Heart left ventricle (tissue), 16 donors: ENCODE measurements at regions of chr6 and their contacts with region 1.

Region 1: DNA sequence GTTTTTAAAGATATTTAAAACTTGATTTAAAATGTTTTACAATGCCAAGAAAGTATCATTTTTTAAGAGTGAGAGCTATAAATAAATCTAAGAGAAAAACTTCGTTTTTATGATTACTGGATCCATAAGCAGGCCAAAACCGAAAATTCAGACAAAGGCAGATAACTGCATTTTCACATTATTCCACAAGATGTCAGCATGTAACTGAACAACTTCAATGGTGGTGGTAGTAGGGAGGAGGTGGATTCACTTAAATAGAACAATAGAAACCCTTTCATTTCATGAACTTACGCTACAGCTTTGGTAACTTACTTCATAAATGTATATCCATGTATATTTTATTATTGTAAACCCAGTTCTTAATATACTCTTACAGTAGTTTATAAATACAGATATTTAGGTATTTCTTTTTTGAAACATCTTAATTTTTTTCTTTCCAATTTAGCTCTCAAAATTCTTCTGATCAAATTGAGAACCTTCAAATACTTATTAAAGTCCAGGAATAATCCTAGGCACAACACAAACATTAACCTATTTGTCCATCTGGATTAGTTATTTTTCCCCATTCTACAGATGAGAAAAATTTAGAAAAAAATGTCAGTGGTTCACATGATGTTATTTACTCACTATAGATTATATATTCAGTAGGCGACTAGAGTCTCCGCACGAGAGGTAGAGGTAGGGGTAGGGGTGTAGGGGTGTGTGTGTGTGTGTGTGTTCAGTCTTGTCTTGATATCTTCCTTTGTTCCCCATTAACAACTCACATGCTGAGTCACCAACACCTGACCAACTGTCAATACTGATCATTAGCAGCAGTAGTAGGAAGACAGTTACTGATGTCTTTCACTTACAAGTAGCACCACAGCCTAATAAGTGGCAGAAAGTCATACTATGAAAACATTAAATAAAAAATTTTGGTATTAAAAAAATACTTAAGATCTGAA is 111.5 kb downstream of the ARHGAP18 start:
- DNase-seq: no peak
- ATAC-seq: peak in 3 of 4 donors; percentile 67 to 71 (median 71)
- H3K4me3 ChIP-seq: no peak overlapping the region
- H3K27ac ChIP-seq: no peak overlapping the region
- H3K4me1 ChIP-seq: peaks cover 0 to 8% (median 0%) of the 10 kb centered on the region in 12 donors
- H3K27me3 ChIP-seq: no peaks in the 10 kb centered on the region
- CTCF ChIP-seq: peak; percentile 70 to 92 (median 88)
- POLR2A ChIP-seq: no peak

Region 2: GRCh38 chr6:129730477-129731165 is 132.1 kb after region 1 on chr6:
- intact Hi-C with region 1: loop called (anchors 1 to 5 kb)
- DNase-seq: no peak
- ATAC-seq: no peak
- H3K4me3 ChIP-seq: no peak overlapping the region
- H3K27ac ChIP-seq: no peak overlapping the region
- H3K4me1 ChIP-seq: peaks cover 0 to 6% (median 0%) of the 10 kb centered on the region in 12 donors
- H3K27me3 ChIP-seq: no peaks in the 10 kb centered on the region
- CTCF ChIP-seq: peak; percentile 38 to 70 (median 58)
- POLR2A ChIP-seq: no peak

Region 3: GRCh38 chr6:129936329-129937165 is 338.0 kb after region 1 on chr6:
- intact Hi-C with region 1: loop called in 6 of 10 experiments (anchors 5 to 10 kb)
- DNase-seq: peak in 3 of 5 donors; percentile 25 to 47 (median 33)
- ATAC-seq: peak in 1 of 4 donors; percentile 22
- H3K4me3 ChIP-seq: no peak overlapping the region
- H3K27ac ChIP-seq: no peak overlapping the region
- H3K4me1 ChIP-seq: peaks cover 0 to 4% (median 0%) of the 10 kb centered on the region in 12 donors
- H3K27me3 ChIP-seq: peaks cover 0 to 13% (median 0%) of the 10 kb centered on the region in 9 donors
- CTCF ChIP-seq: peak in 11 of 12 donors; percentile 20 to 69 (median 54)
- POLR2A ChIP-seq: no peak

Region 4: GRCh38 chr6:130020907-130021629 is 422.6 kb after region 1 on chr6:
- intact Hi-C with region 1: loop called (anchors 5 to 10 kb)
- DNase-seq: peak; percentile 72 to 84 (median 77)
- ATAC-seq: peak; percentile 72 to 91 (median 85)
- H3K4me3 ChIP-seq: peak overlapping the region; percentile 52 to 96 (median 84)
- H3K27ac ChIP-seq: peak overlapping the region in 11 of 12 donors; percentile 50 to 93 (median 76)
- H3K4me1 ChIP-seq: peaks cover 0 to 10% (median 2%) of the 10 kb centered on the region in 12 donors
- H3K27me3 ChIP-seq: no peaks in the 10 kb centered on the region
- CTCF ChIP-seq: peak; percentile 64 to 86 (median 78)
- POLR2A ChIP-seq: no peak